PC-3 (cell line): ENCODE measurements at regions of chr2 and their contacts with region 1.

Region 1: GRCh38 chr2:237413777-237414661 is at the start of gene COL6A3:
- DNase-seq: no peak
- ATAC-seq: no peak
- H3K4me3 ChIP-seq: no peak within 1 kb of the TSS
- H3K27ac ChIP-seq: no peak within 1 kb of the TSS
- H3K4me1 ChIP-seq: no peaks in the 10 kb centered on the region
- H3K27me3 ChIP-seq: no peaks in the 10 kb centered on the region
- CTCF ChIP-seq: no peak
- total RNA-seq, gene COL6A3: 45.0 and 53.4 TPM in 2 replicates

Region 2: DNA sequence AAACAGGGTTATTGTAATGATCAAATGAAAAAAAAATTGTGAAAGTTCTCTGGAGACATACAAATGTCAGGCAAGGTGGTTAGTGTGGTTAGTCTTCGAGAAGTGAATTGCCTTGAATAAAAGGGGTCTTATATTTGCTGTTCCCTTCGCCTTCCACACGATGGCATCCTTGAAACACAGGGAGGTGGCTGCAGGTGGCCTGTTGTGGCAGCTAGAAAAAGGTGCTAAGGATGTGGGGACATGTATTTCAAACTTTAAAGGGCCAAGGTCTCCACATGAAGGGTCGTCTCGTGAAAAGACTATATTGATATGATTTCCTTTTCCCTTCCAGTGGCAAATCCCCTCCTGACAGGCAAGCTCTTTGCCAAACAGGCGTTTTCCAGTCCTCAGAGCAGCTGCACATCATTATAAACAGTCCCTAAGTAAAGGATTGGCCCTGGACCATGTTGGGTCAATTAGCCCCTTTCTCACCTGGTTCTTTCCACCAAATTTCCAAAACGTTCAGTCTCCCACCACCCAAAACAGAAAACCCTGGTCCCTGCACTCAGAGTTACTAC is 259.9 kb before region 1 on chr2:
- CTCF ChIA-PET with region 1: interaction called, 3 read pairs
- POLR2A ChIA-PET with region 1: no interaction called
- intact Hi-C with region 1: loop called (anchors 5 kb)
- DNase-seq: peak; percentile 70
- ATAC-seq: peak; percentile 70
- H3K4me3 ChIP-seq: no peak overlapping the region
- H3K27ac ChIP-seq: no peak overlapping the region
- H3K4me1 ChIP-seq: no peaks in the 10 kb centered on the region
- H3K27me3 ChIP-seq: no peaks in the 10 kb centered on the region
- CTCF ChIP-seq: peak; percentile 86

Region 3: DNA sequence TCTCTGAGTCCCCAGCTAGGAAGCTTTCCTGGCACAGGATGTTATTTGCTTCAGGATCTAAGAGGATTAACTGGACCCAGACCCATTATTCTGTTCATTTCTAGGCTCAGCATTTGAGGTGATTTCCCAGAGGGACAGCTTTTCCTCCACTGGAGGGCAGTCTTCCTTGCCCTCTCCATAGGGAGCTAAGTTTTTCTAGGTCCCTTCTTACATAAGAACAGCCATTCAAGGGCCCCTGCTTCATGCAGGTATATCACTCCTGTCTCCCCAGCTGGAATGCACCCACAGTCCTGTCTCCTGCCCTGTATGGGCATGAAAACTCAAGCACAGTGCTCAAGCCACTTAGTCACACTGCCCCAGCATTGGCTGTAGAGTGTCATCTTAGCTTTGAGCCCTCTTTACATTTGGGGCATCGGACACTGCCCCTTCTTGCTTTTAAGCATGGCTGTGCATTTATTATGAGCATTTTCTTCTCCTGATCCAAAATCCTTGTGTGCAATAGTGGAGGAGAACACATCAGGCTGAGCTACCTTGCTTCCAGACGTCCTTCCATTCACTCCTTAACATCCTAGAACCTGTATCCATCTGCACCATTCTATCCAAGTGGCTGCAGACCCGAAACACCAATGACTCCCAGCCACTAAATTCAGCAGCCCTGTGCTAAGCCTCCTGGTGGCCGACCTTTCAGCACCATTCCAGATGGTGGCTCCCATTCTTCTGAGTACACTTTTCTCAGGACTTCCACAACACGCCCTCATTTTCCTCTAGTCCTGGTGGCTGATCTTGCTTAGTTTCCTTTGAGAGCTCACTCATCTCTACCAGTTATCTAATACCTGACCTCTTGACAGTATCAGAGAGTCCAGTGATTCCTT is 248.4 kb before region 1 on chr2:
- CTCF ChIA-PET with region 1: interaction called, 17 read pairs
- POLR2A ChIA-PET with region 1: no interaction called
- intact Hi-C with region 1: no loop called
- DNase-seq: peak; percentile 56
- ATAC-seq: peak; percentile 64
- H3K4me3 ChIP-seq: no peak overlapping the region
- H3K27ac ChIP-seq: no peak overlapping the region
- H3K4me1 ChIP-seq: no peaks in the 10 kb centered on the region
- H3K27me3 ChIP-seq: no peaks in the 10 kb centered on the region
- CTCF ChIP-seq: peak; percentile 85

Region 4: DNA sequence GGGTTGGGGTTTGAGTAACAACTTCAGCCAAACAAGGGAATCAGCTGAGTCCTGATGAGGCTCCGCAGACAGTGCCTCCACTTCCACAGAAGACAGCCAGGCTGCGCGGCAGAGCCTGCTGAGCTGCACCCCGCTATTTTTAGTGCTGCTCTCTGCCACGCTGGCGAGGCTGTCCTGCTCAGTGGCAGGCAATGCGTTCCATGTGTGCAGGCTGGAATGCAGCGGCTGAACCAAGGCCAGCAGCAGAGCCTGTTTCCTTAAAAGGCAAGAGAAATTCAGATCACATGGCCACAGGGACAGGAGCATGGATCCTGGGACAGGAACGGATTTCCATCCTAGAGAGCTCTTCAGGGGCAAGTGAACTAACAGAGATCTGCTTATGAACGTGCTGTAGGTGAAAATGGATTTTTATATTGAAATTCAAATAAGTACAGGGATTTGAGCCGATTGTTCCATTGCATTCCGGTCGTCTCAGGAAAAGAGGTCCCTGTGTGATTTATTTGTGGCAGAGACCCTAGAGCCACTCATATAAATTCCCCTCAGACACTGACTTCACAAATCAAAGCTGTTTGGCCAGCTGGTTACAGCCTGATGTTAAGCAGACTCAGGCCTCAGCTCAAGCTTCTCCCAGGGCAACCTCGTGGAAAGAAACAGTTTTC is 98.7 kb before region 1 on chr2:
- CTCF ChIA-PET with region 1: interaction called, 12 read pairs
- POLR2A ChIA-PET with region 1: no interaction called
- intact Hi-C with region 1: no loop called
- DNase-seq: no peak
- ATAC-seq: no peak
- H3K4me3 ChIP-seq: no peak overlapping the region
- H3K27ac ChIP-seq: no peak overlapping the region
- H3K4me1 ChIP-seq: no peaks in the 10 kb centered on the region
- H3K27me3 ChIP-seq: no peaks in the 10 kb centered on the region
- CTCF ChIP-seq: no peak

Region 5: DNA sequence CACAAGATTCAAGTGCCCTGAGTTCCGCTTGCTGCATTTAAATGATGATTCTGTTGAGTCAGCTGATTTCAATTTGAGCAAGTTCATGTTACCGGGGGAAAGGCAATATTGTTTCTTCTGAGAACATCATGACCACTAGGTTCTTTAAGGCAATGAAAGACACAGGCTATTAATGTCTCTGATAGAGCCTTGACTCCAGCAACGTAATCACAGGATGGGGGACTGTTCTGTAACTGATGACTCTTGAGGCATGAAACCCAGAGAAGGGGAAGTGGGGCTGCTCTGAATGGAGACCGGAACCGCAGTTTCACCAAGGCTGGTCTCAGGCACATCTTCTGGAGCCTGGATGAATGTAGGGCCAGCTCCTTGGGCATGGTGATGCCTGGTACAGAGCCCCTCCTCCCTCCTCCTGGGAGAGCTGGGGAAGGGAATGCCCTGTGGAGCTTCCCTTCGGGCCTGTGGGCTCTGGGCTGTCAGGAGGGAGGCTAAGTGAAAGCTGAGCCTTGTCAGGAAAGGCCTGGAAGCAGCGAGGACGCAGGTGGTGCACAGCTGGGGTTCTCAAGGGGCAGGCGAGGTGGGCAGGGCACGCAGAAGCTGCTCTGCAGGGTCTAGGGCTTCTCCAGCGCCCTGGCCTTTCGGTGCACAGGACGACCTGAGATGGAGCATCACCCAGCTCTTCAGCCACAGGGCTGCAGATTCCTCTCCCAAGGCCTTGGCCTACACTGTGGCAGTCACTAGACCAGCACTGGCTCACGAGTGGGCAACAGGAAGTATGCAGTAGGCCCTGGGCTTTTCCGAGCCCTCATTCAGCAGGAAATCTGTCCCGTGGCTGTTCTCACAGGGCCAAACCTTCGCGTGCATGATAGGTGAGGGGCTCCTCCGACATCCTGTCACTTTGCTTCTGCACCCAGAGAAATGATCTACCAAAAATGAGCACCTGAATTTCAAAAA is 115.7 kb after region 1 on chr2:
- CTCF ChIA-PET with region 1: no interaction called
- POLR2A ChIA-PET with region 1: interaction called, 11 read pairs
- intact Hi-C with region 1: no loop called
- DNase-seq: no peak
- ATAC-seq: no peak
- H3K4me3 ChIP-seq: no peak overlapping the region
- H3K27ac ChIP-seq: no peak overlapping the region
- H3K4me1 ChIP-seq: no peaks in the 10 kb centered on the region
- H3K27me3 ChIP-seq: no peaks in the 10 kb centered on the region
- CTCF ChIP-seq: no peak